Right ventricle myocardium inferior (tissue), 1 donor: ENCODE measurements at regions of chr2 and their contacts with region 1.

Region 1: DNA sequence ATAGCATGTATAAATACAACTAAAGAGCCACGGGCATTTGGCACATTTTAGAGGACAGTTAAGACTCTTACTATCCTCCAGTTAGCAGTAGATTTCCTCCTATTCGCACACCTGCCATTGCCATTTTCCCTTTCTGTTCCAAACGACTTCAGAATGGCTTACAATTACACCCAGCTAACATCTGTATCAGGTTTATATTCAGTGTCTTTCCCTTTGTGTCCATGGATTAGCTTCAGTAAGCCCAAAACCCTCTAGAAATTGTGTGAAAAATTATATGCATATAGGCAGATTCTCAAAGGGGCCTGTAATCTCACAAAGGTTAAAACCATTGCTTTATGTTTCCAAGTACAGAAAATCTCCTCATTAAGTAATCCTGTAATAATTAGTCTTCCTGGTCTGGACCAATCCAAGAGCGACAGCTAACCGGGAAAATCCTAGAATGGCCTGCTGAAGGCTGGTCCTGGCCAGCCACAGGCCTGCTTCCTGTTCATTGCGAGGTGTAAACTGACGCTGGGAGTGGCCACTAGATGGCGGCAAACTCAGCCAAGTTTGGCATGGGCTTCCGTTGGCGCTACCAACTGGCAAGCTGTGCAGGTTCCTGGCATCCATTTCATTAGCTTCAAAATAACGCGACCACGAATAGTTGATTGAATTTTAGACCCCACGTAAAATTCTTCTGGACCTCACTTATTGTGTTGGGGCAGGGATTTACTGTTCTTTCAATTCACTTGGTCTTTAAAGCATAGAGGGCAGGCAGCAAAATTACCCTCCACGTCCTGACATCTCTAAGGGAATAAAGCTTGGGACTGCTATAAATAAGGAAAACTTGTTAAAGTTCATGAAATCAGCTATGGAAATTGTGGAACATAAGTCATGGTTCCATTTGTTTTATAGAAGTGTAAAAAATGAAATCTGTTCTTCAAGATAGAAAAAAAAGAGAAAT is 17.1 kb downstream of the ARHGAP25 start:
- DNase-seq: peak; percentile 95
- ATAC-seq: peak; percentile 90

Region 2: GRCh38 chr2:68709421-68709911 is 42.2 kb before region 1 on chr2:
- intact Hi-C with region 1: loop called (anchors 2 kb)
- DNase-seq: no peak
- ATAC-seq: no peak

Region 3: GRCh38 chr2:68832233-68832869 is 80.7 kb after region 1 on chr2:
- intact Hi-C with region 1: loop called (anchors 2 kb)
- DNase-seq: peak; percentile 73
- ATAC-seq: peak; percentile 43

Region 4: GRCh38 chr2:68909793-68910674 is 158.4 kb after region 1 on chr2:
- intact Hi-C with region 1: loop called (anchors 2 kb)
- DNase-seq: no peak
- ATAC-seq: no peak

Region 5: GRCh38 chr2:68925295-68925896 is 173.7 kb after region 1 on chr2:
- intact Hi-C with region 1: loop called (anchors 5 kb)
- DNase-seq: no peak
- ATAC-seq: peak; percentile 62